ENCODE measurements at regions of chr17 and their contacts with region 1.

Region 1: GRCh38 chr17:39536468-39536867 is 71.3 kb downstream of the NEUROD2 start:
- DNase-seq: no peak
- ATAC-seq: no peak
- H3K4me3 ChIP-seq: no peak overlapping the region
- H3K27ac ChIP-seq: no peak overlapping the region
- H3K4me1 ChIP-seq: no peaks in the 10 kb centered on the region
- H3K27me3 ChIP-seq: no peaks in the 10 kb centered on the region
- CTCF ChIP-seq: no peak
- POLR2A ChIP-seq: no peak
- RAD21 ChIP-seq: no peak

Region 2: DNA sequence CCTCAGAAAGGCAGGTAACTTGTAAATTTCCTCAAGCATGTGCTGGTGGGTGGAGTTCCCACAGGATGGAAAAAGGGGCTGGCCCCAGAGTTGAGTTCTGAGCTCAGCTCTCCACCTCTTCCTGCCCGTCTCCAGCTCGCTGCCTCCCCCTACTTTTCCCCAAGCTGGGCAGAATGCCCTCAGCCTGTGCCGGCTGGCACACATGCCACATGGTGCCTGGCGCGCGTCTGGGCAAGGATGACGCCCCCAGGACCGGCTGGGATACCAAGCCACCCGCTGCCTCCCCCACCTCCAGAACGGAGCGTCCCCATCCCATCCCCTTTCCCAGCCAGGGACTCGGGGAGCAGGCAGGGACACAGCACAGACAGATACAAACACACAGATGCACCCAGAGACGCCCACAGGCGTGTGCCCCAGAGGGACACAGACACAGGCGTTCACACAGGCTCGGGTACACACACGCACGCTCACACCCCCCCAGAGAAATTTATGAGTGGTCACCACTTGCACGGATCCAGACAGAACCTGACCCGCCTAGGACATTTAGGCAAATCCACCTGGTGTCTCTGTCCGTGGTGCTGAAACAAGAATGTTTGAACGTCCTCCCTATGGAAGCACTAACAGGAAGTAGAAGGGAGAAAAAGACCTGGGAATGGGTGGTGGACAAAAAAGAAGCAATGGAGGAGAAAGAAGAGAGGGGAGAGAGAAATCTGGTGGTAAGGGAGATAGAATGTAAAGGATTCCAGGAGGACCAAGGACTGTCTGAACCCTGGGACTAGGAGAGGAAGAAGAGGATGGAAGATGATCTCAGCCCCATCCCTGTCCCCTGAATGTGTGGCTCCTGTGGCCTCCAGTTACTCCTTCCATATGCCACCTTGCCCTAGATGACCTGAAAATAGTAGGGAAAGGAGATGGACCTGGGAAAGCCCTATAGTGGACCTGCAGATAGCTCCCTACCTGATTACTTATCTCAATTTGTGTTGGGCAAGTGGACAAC is 55.8 kb after region 1 on chr17:
- CTCF ChIA-PET with region 1: no interaction called
- POLR2A ChIA-PET with region 1: no interaction called
- dilution Hi-C with region 1: no loop called
- in situ Hi-C with region 1: no loop called
- intact Hi-C with region 1: no loop called
- DNase-seq: peak; percentile 50
- ATAC-seq: no peak
- H3K4me3 ChIP-seq: no peak overlapping the region
- H3K27ac ChIP-seq: no peak overlapping the region
- H3K4me1 ChIP-seq: no peaks in the 10 kb centered on the region
- H3K27me3 ChIP-seq: peaks cover 44% of the 10 kb centered on the region
- CTCF ChIP-seq: no peak
- POLR2A ChIP-seq: no peak
- RAD21 ChIP-seq: no peak

Region 3: DNA sequence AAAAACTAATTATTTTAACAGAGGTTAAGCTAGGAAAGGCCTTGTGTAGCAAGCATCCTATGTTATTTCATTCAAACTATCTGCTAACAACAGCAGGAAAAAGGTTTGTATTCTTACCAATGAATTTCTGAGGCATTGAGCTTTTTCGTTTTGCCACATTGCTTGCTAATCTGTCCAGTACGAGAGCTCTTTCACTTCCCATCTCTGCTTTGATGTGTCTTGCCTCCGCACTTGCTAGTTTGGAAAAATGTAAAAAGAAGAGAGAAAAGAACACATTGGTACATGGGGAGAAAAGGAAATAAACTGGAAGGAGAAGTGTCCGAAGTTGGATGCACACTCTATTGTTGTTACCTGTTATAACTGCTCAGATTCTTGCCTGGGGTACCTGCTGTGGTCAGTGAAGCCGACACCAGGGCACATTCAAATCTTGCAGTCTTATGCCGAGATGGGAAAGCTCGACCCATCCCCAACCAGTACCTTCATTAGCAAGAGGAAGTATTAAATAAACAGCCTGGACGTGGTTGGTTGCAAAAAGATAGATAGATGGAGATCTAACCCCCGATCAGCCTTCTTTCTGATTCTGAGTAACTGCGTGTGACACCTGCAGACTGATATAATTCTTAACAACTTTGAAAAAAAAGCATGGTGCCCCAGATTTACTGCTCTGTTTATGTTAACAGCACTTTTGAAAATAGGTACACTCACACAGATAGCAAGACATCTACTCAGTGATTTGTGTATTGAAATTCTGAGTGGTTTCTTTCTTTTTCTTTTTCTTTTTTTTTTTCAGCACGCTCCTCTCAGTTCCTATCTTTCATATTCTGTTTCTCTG is 241.3 kb after region 1 on chr17:
- CTCF ChIA-PET with region 1: no interaction called
- POLR2A ChIA-PET with region 1: no interaction called
- dilution Hi-C with region 1: no loop called
- in situ Hi-C with region 1: no loop called
- intact Hi-C with region 1: no loop called
- DNase-seq: no peak
- ATAC-seq: no peak
- H3K4me3 ChIP-seq: no peak overlapping the region
- H3K27ac ChIP-seq: no peak overlapping the region
- H3K4me1 ChIP-seq: no peaks in the 10 kb centered on the region
- H3K27me3 ChIP-seq: peaks cover 59% of the 10 kb centered on the region
- CTCF ChIP-seq: no peak
- POLR2A ChIP-seq: no peak
- RAD21 ChIP-seq: no peak

Region 4: GRCh38 chr17:39800540-39800939 is 264.1 kb after region 1 on chr17:
- CTCF ChIA-PET with region 1: no interaction called
- POLR2A ChIA-PET with region 1: interaction called, 15 read pairs
- dilution Hi-C with region 1: no loop called
- in situ Hi-C with region 1: no loop called
- intact Hi-C with region 1: no loop called
- DNase-seq: no peak
- ATAC-seq: no peak
- H3K4me3 ChIP-seq: no peak overlapping the region
- H3K27ac ChIP-seq: no peak overlapping the region
- H3K4me1 ChIP-seq: no peaks in the 10 kb centered on the region
- H3K27me3 ChIP-seq: peaks cover 17% of the 10 kb centered on the region
- CTCF ChIP-seq: no peak
- POLR2A ChIP-seq: no peak
- RAD21 ChIP-seq: no peak

Measured in IMR-90 (cell line).